OCI-LY7 (cell line): ENCODE measurements at regions of chr3 and their contacts with region 1.

Region 1: GRCh38 chr3:46629551-46630517 is 17.5 kb downstream of the FAM240A start:
- DNase-seq: peak; percentile 65
- H3K4me3 ChIP-seq: no peak overlapping the region
- H3K27ac ChIP-seq: no peak overlapping the region
- H3K4me1 ChIP-seq: peaks cover 12% of the 10 kb centered on the region
- CTCF ChIP-seq: peak; percentile 85

Region 2: GRCh38 chr3:46538803-46539442 is 90.9 kb before region 1 on chr3:
- CTCF ChIA-PET with region 1: no interaction called
- POLR2A ChIA-PET with region 1: interaction called, 10 read pairs
- intact Hi-C with region 1: no loop called
- DNase-seq: peak; percentile 99
- H3K4me3 ChIP-seq: peak overlapping the region; percentile 56
- H3K27ac ChIP-seq: peak overlapping the region; percentile 99
- H3K4me1 ChIP-seq: peaks cover 79% of the 10 kb centered on the region
- CTCF ChIP-seq: no peak

Region 3: GRCh38 chr3:46558184-46559043 is 71.4 kb before region 1 on chr3:
- CTCF ChIA-PET with region 1: no interaction called
- POLR2A ChIA-PET with region 1: no interaction called
- intact Hi-C with region 1: loop called (anchors 5 kb)
- DNase-seq: peak; percentile 88
- H3K4me3 ChIP-seq: no peak overlapping the region
- H3K27ac ChIP-seq: peak overlapping the region; percentile 32
- H3K4me1 ChIP-seq: peaks cover 23% of the 10 kb centered on the region
- CTCF ChIP-seq: peak; percentile 98